HCT116 (cell line): ENCODE measurements at regions of chr6 and their contacts with region 1.

Region 1: GRCh38 chr6:129748212-129748900 is 38.4 kb upstream of the ARHGAP18 start:
- DNase-seq: peak; percentile 90
- ATAC-seq: peak; percentile 47
- H3K4me3 ChIP-seq: peak overlapping the region in 1 of 2 experiments; percentile 38; a peak in 2 of 4 replicates
- H3K27ac ChIP-seq: peak overlapping the region; percentile 100
- H3K4me1 ChIP-seq: peaks cover 86 to 94% of the 10 kb centered on the region in 2 experiments
- H3K27me3 ChIP-seq: no peaks in the 10 kb centered on the region
- CTCF ChIP-seq: peak in 2 of 3 experiments; percentile 48 to 61; a peak in 4 of 6 replicates
- POLR2A ChIP-seq: no peak
- RAD21 ChIP-seq: no peak; the same call in 1 of the 2 replicates

Region 2: GRCh38 chr6:129490521-129491245 is 257.7 kb before region 1 on chr6:
- CTCF ChIA-PET with region 1: no interaction called
- POLR2A ChIA-PET with region 1: interaction called, 12 read pairs
- RAD21 ChIA-PET with region 1: no interaction called
- intact Hi-C with region 1: loop called (anchors 2 kb)
- DNase-seq: peak; percentile 94
- ATAC-seq: peak; percentile 76
- H3K4me3 ChIP-seq: peak overlapping the region; percentile 33 to 51
- H3K27ac ChIP-seq: peak overlapping the region; percentile 100
- H3K4me1 ChIP-seq: peaks cover 66 to 85% of the 10 kb centered on the region in 2 experiments
- H3K27me3 ChIP-seq: no peaks in the 10 kb centered on the region
- CTCF ChIP-seq: no peak
- POLR2A ChIP-seq: peak; percentile 52
- RAD21 ChIP-seq: 0 out of 2 replicates have a peak, but pooled peaks have one; percentile 18

Region 3: GRCh38 chr6:129646642-129647041 is 101.7 kb before region 1 on chr6:
- CTCF ChIA-PET with region 1: no interaction called
- POLR2A ChIA-PET with region 1: interaction called, 4 read pairs
- RAD21 ChIA-PET with region 1: no interaction called
- intact Hi-C with region 1: loop called (anchors 5 kb)
- DNase-seq: no peak
- ATAC-seq: no peak
- H3K4me3 ChIP-seq: peak overlapping the region in 1 of 2 experiments; percentile 8; a peak in 1 of 4 replicates
- H3K27ac ChIP-seq: peak overlapping the region; percentile 99
- H3K4me1 ChIP-seq: peaks cover 95 to 98% of the 10 kb centered on the region in 2 experiments
- H3K27me3 ChIP-seq: no peaks in the 10 kb centered on the region
- CTCF ChIP-seq: no peak
- POLR2A ChIP-seq: no peak
- RAD21 ChIP-seq: no peak

Region 4: DNA sequence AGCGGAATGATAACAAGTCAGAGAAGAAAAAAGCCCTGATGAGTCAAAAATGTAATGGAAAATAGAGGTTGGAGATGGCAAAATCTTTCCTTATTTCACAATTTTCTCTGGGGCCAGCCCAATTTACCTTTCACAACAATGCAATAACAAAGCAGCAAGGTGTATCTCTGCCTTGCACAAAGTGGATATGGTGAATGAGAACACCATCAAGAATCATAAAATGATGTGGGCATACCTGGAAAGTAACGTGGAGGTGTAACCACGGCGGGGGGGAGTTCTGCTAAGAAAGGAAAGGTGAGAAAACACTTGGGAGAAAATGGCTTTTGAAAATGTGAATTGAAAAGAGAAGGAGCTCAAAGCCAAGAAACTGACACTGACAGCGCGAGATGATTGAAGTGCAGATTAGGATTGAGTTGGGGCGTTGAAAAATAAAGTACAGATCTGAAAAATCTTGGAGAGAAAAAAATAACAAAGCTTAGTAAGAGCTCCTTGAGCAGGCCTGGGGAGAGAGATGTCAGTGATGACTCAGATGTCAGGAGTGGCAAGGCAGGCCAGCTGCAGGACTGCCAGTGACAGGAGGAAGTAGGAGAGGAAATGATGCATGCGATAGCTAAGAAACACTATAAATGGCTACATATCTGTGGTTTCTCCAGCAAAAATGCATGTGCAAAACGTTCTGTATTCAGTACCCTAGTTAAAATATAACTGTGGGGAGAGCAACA is 64.6 kb before region 1 on chr6:
- CTCF ChIA-PET with region 1: interaction called, 3 read pairs
- POLR2A ChIA-PET with region 1: interaction called, 7 read pairs
- RAD21 ChIA-PET with region 1: no interaction called
- intact Hi-C with region 1: loop called (anchors 2 kb)
- DNase-seq: peak; percentile 87
- ATAC-seq: peak; percentile 78
- H3K4me3 ChIP-seq: peak overlapping the region in 1 of 2 experiments; percentile 35; a peak in 2 of 4 replicates
- H3K27ac ChIP-seq: peak overlapping the region; percentile 97
- H3K4me1 ChIP-seq: peaks cover 99 to 100% of the 10 kb centered on the region in 2 experiments
- H3K27me3 ChIP-seq: no peaks in the 10 kb centered on the region
- CTCF ChIP-seq: no peak
- POLR2A ChIP-seq: no peak
- RAD21 ChIP-seq: no peak

Region 5: DNA sequence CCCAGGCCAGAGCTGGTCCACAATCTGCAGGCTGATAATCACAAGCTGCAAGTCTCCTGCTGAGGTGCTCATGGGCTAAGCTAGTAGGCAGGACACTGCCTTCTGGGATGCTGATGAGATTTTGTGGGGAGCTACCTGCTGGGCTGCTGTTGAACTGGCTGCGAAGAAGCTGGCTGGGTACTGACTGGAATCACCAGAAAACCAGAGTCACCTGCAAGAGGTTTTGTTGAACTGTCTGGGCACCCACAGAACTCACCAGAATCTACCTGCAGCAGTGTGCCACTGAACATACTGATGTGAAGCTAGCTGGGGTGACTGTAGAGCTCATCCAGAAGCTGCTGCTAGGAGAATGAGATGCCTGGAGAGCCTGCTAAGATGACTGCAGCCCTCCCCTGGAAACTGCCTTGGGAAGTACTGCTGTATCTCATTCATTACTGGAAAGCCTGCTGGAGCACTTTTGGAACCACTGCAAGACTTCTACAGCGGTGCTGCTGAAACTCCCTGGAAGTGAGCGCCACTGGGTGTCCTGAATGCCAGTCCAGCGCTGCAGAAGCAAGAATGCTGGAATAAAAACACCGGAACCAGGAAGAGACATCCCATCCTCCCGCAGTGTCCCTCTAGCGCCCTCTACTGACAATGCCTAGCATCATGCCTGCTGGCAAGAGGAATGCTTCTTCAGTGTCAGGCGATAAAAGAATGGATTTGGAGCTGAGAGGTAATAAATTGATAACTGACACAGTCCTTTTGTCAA is 26.5 kb after region 1 on chr6:
- CTCF ChIA-PET with region 1: interaction called, 12 read pairs
- POLR2A ChIA-PET with region 1: no interaction called
- RAD21 ChIA-PET with region 1: no interaction called
- intact Hi-C with region 1: no loop called
- DNase-seq: peak; percentile 68
- ATAC-seq: peak; percentile 93
- H3K4me3 ChIP-seq: peak overlapping the region; percentile 24 to 34
- H3K27ac ChIP-seq: peak overlapping the region; percentile 46
- H3K4me1 ChIP-seq: peaks cover 8 to 13% of the 10 kb centered on the region in 2 experiments; a peak in 3 of 4 replicates
- H3K27me3 ChIP-seq: no peaks in the 10 kb centered on the region
- CTCF ChIP-seq: peak; percentile 77 to 100 (median 98)
- POLR2A ChIP-seq: no peak
- RAD21 ChIP-seq: peak; percentile 85

Region 6: GRCh38 chr6:129893640-129894039 is 145.3 kb after region 1 on chr6:
- CTCF ChIA-PET with region 1: no interaction called
- POLR2A ChIA-PET with region 1: no interaction called
- RAD21 ChIA-PET with region 1: no interaction called
- intact Hi-C with region 1: no loop called
- DNase-seq: no peak
- ATAC-seq: no peak
- H3K4me3 ChIP-seq: no peak overlapping the region
- H3K27ac ChIP-seq: no peak overlapping the region
- H3K4me1 ChIP-seq: peaks cover 14 to 23% of the 10 kb centered on the region in 2 experiments
- H3K27me3 ChIP-seq: no peaks in the 10 kb centered on the region
- CTCF ChIP-seq: peak; percentile 20 to 64 (median 42); a peak in 3 of 6 replicates
- POLR2A ChIP-seq: no peak
- RAD21 ChIP-seq: peak; percentile 57